Transverse colon (tissue), 4 donors: ENCODE measurements at regions of chr10 and their contacts with region 1.

Region 1: GRCh38 chr10:22316285-22317120 is at the start of gene COMMD3:
- DNase-seq: peak; percentile 88
- H3K4me3 ChIP-seq: peak within 1 kb of the TSS; percentile 83 to 98 (median 91)
- H3K27ac ChIP-seq: peak within 1 kb of the TSS; percentile 96 to 99 (median 97)
- H3K4me1 ChIP-seq: peaks cover 3 to 35% (median 14%) of the 10 kb centered on the region in 4 donors
- H3K27me3 ChIP-seq: no peaks in the 10 kb centered on the region
- CTCF ChIP-seq: no peak
- EP300 ChIP-seq: no peak
- POLR2A ChIP-seq: peak; percentile 79
- total RNA-seq, gene COMMD3: 3.0 to 35.1 (median 18.3) TPM

Region 2: DNA sequence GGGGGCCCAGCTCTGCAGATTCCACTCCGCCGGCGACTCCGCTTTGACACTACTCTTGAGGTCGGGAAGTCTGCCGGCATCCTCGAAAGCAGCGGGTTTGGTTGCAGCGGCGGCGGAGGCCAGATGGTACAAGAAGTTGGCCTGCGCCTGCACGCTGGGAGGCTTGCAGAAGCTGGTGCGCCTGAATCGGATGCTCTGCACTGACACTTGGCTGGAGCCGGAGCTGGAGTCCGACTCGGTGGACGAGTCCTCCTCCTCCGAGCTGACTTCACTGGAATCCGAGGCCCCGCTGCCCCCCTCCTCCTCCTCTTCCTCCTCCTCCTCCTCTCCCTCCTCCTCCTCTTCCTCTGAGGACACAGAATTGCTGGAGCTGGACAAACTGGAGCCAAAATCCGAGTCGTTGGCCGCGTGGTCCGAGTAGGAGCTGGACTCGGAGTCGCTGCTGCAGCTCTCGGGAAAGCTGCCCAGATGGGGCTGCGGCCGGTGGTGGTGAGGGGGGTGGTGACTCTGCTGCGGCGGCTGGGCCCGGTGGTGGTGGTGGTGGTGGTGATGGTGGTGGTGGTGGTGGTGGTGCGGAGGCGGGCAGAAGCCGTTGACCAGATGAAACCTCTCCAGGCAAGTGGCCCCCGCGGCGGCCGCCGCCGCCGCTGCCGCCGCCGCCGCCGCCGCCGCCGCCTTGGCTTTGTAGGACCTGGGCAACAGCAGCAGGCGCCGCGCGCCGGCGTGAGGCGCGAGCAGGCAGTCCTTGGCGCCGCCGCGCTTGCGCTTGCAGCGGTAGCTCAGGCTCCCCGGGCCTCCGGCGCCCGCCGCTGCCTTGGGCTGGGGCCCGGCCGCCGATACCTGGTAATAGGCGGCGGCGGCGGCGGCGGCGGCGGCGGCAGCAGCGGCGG is 800.0 kb before region 1 on chr10:
- in situ Hi-C with region 1: loop called in 1 of 4 experiments (anchors 25 kb)
- intact Hi-C with region 1: no loop called
- DNase-seq: peak; percentile 53
- H3K4me3 ChIP-seq: peak overlapping the region; percentile 19 to 63 (median 54)
- H3K27ac ChIP-seq: peak overlapping the region; percentile 66 to 85 (median 82)
- H3K4me1 ChIP-seq: peaks cover 5 to 59% (median 20%) of the 10 kb centered on the region in 4 donors
- H3K27me3 ChIP-seq: peaks cover 94% of the 10 kb centered on the region
- CTCF ChIP-seq: no peak
- EP300 ChIP-seq: no peak
- POLR2A ChIP-seq: no peak

Region 3: GRCh38 chr10:21525367-21526183 is 790.9 kb before region 1 on chr10 and contains the start of gene SKIDA1:
- in situ Hi-C with region 1: loop called in 1 of 4 experiments (anchors 25 kb)
- intact Hi-C with region 1: loop called (anchors 2 kb)
- DNase-seq: peak; percentile 82
- H3K4me3 ChIP-seq: peak within 1 kb of the TSS; percentile 54 to 67 (median 63)
- H3K27ac ChIP-seq: peak within 1 kb of the TSS; percentile 94 to 96 (median 95)
- H3K4me1 ChIP-seq: peaks cover 0 to 41% (median 14%) of the 10 kb centered on the region in 4 donors
- H3K27me3 ChIP-seq: peaks cover 47% of the 10 kb centered on the region
- CTCF ChIP-seq: no peak
- EP300 ChIP-seq: no peak
- POLR2A ChIP-seq: no peak
- total RNA-seq, gene SKIDA1: 0.27 to 0.60 TPM in 2 of 4 donors, not detected in the others

Region 4: DNA sequence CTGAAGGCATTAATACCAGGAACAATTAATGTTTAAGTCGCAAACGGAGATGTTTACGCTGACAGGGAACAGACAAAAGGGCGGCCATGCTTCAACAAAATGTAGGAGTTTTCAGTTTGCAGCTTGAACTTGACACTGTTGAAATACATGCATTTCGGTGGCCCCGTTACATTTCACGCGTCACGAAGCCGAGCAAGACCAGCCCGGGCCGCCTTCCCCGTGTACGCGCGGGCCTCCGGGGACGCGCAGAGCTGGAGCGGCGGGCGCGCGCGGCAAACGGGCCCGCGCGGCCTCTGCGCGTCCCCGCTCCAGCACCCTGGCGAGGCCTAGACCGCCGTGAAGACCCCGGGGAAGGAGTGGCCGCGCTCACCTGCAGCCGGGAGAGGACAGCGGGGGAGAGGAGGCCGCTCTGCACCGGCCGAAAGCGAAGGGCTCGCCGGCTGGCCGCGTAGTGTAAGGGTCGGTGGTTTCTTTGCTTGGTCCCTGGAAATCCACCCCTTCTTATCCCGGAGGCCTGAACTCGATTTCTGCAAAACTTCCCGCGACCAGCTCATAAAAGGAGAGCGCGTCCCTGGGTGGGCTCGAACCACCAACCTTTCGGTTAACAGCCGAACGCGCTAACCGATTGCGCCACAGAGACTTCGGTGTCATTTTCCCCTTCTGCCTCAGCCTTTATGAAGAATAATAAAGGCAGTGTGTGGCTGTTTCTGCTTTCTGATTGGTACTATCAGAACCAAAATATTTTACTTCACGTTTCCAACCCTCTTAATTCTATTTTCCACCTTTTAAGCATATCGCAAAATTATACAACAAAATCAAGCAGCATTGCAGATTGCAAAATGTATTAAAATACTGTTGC is 87.3 kb before region 1 on chr10:
- in situ Hi-C with region 1: no loop called
- intact Hi-C with region 1: loop called (anchors 2 kb)
- DNase-seq: peak; percentile 83
- H3K4me3 ChIP-seq: peak overlapping the region; percentile 66 to 95 (median 80)
- H3K27ac ChIP-seq: peak overlapping the region; percentile 89 to 95 (median 91)
- H3K4me1 ChIP-seq: peaks cover 0 to 16% (median 5%) of the 10 kb centered on the region in 4 donors
- H3K27me3 ChIP-seq: peaks cover 5% of the 10 kb centered on the region
- CTCF ChIP-seq: peak in 1 of 5 experiments; percentile 9
- EP300 ChIP-seq: no peak
- POLR2A ChIP-seq: peak; percentile 32

Region 5: GRCh38 chr10:22244001-22244400 is 72.5 kb before region 1 on chr10:
- in situ Hi-C with region 1: loop called in 1 of 4 experiments (anchors 10 kb)
- intact Hi-C with region 1: no loop called
- DNase-seq: no peak
- H3K4me3 ChIP-seq: no peak overlapping the region
- H3K27ac ChIP-seq: no peak overlapping the region
- H3K4me1 ChIP-seq: no peaks in the 10 kb centered on the region
- H3K27me3 ChIP-seq: peaks cover 28% of the 10 kb centered on the region
- CTCF ChIP-seq: no peak
- EP300 ChIP-seq: no peak
- POLR2A ChIP-seq: no peak